ENCODE measurements at regions of chr18 and their contacts with region 1.

Region 1: GRCh38 chr18:40371673-40372072 is 1583.4 kb upstream of the PIK3C3 start:
- DNase-seq: peak; percentile 83
- ATAC-seq: peak; percentile 74
- H3K4me3 ChIP-seq: no peak overlapping the region
- H3K27ac ChIP-seq: no peak overlapping the region
- H3K4me1 ChIP-seq: peaks cover 4% of the 10 kb centered on the region; the same call in 1 of the 2 replicates
- H3K27me3 ChIP-seq: no peaks in the 10 kb centered on the region
- CTCF ChIP-seq: no peak
- POLR2A ChIP-seq: no peak
- RAD21 ChIP-seq: no peak

Region 2: DNA sequence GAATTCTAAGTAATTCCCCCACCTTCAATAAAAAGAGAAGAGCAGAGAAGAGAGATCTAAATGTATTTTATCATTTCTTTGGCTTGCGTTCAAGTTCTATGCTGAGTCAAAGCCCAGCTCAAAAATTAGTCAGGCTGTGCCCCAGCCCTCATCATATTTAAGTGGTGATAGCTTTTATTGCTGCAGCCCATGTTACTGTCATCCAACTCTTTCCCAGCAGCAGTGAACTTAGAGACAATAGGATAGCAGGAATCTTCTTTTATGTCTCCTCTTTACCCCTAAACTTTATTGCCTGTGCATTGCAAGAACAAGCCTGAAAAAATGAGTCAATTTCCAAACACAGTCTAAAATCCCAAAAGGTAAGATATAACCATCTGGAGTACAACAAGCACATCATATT is 15.9 kb before region 1 on chr18:
- CTCF ChIA-PET with region 1: no interaction called
- POLR2A ChIA-PET with region 1: interaction called, 17 read pairs
- dilution Hi-C with region 1: no loop called
- in situ Hi-C with region 1: no loop called
- intact Hi-C with region 1: no loop called
- DNase-seq: peak; percentile 64
- ATAC-seq: peak; percentile 64
- H3K4me3 ChIP-seq: no peak overlapping the region
- H3K27ac ChIP-seq: no peak overlapping the region
- H3K4me1 ChIP-seq: no peaks in the 10 kb centered on the region
- H3K27me3 ChIP-seq: no peaks in the 10 kb centered on the region
- CTCF ChIP-seq: no peak
- POLR2A ChIP-seq: no peak
- RAD21 ChIP-seq: no peak

Region 3: DNA sequence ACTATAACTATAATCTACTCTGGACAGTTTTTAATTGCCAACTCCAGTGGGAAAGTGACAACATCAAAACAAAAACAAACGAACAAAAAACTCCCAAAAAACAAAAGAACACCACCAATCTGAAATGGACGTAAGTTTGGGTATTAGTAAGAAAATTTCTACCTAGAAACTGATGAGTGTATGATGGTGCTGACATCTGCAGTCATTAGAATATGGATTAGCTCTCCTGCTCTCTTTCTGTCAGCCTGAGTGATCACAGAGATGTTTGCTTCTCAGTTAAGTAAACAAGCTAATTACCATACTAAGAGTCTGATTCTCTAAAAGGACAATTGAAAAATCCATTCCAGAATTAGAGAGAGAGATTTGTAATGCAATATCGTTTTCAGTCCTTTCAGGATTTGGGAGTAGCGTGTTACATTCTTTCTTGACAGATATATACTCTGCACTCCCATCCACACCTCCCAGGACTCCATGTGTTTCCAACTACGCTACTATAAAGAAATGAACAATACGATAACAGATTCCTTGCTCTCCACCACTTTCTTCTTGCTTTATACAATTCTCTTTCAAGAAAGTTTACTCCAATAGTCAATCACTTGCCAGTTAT is 236.0 kb after region 1 on chr18:
- CTCF ChIA-PET with region 1: no interaction called
- POLR2A ChIA-PET with region 1: no interaction called
- dilution Hi-C with region 1: no loop called
- in situ Hi-C with region 1: no loop called
- intact Hi-C with region 1: no loop called
- DNase-seq: no peak
- ATAC-seq: no peak
- H3K4me3 ChIP-seq: no peak overlapping the region
- H3K27ac ChIP-seq: no peak overlapping the region
- H3K4me1 ChIP-seq: no peaks in the 10 kb centered on the region
- H3K27me3 ChIP-seq: no peaks in the 10 kb centered on the region
- CTCF ChIP-seq: no peak
- POLR2A ChIP-seq: no peak
- RAD21 ChIP-seq: no peak

Region 4: DNA sequence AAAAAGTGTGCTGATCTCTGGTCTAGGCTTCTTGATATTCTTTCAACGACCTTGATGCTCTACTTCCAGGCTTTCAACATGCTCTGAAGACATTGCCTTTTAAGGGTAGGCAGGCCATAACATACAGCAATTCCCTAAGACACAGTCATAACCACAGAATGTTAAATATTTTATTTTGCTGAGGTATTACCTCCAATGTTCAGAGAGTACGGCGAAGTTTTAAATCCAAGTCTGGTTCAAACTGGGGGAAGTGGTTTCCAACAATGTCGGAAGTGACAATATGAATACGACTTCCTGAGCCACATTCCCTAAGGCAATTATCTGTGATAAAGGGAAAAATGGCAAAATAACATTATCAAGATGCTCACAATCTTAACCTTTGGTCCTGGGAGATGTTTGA is 505.4 kb after region 1 on chr18:
- CTCF ChIA-PET with region 1: no interaction called
- POLR2A ChIA-PET with region 1: no interaction called
- dilution Hi-C with region 1: no loop called
- in situ Hi-C with region 1: no loop called
- intact Hi-C with region 1: loop called (anchors 10 kb)
- DNase-seq: peak; percentile 97
- ATAC-seq: peak; percentile 95
- H3K4me3 ChIP-seq: no peak overlapping the region
- H3K27ac ChIP-seq: peak overlapping the region; percentile 75
- H3K4me1 ChIP-seq: peaks cover 12% of the 10 kb centered on the region
- H3K27me3 ChIP-seq: no peaks in the 10 kb centered on the region
- CTCF ChIP-seq: no peak
- POLR2A ChIP-seq: no peak
- RAD21 ChIP-seq: no peak; the same call in 1 of the 2 replicates

Measured in IMR-90 (cell line).